ENCODE measurements at regions of chr2 and their contacts with region 1.

Region 1: DNA sequence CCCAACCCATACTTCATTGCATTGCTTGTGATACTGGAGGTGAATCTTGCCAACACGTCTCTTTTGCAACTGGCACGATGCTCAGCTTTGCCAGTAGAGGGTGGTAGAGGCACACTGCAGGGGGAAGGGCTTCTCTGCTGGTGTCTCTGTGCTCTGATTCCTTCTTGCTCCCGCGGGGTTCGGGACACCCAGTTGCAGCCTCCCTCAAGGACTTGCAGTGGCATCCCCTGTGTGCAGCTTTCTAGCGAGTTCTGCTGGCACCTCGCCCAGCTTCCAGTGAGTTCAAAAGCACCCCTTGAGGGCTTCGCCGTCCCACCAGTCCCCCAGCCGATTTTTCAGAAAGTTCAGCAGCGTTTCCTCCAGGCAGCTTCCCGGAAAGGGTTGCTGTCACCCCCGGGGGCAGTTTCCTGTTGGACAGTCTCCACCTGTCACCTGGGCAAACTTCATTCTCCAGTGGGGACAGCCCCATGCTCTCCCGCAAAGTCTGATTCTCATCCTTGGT is 35.3 kb upstream of the EN1 start:
- DNase-seq: peak; percentile 71
- ATAC-seq: peak; percentile 75
- H3K4me3 Mint-ChIP-seq: peak overlapping the region; percentile 73
- H3K27ac Mint-ChIP-seq: peak overlapping the region; percentile 46
- H3K4me1 Mint-ChIP-seq: peaks cover 14% of the 10 kb centered on the region
- H3K27me3 Mint-ChIP-seq: peaks cover 6% of the 10 kb centered on the region

Region 2: DNA sequence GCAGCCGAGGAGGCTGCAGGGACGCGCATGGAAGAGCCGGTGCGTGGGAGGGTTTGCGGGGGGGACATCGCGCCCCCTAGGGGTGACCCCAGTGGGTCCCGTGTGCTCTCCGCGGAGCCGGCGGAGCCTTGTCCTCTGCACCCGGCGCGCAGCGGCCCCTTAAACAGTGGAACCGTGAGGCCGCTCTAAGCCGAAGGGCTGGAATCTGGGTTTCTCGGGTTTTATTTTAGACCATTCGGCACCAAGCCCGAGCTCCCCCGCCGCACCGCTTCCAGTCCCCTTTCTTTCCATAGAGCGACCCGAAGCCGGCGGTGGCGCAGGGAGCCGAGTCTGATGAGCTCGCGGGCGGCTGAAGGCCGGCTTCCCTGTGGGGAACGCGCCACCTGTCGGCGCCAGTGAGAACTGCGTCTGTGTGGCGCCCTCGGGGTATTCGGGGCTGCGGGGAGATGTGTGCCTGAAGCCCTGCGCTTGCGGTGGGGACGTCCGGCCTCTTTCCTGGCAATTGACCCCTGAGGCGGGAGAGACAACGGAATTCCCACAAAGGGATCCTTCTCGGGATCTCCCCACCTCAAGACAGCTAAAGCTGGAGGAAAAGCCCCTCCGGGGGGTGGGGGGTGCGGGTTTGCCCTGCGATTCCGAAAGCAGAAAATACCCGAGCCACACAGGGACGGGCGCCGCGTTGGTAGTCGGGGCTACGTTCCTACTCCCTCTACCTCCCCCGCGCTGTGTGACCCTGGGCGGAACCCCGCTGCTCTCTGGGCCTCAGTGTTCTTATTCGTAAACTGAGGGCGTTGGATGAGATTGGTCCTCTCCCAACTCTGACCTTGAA is 27.1 kb before region 1 on chr2:
- CTCF ChIA-PET with region 1: interaction called, 14 read pairs
- POLR2A ChIA-PET with region 1: no interaction called
- DNase-seq: peak; percentile 82
- ATAC-seq: peak; percentile 90
- H3K4me3 Mint-ChIP-seq: peak overlapping the region; percentile 42
- H3K27ac Mint-ChIP-seq: peak overlapping the region; percentile 11
- H3K4me1 Mint-ChIP-seq: peaks cover 11% of the 10 kb centered on the region
- H3K27me3 Mint-ChIP-seq: peaks cover 79% of the 10 kb centered on the region

Region 3: DNA sequence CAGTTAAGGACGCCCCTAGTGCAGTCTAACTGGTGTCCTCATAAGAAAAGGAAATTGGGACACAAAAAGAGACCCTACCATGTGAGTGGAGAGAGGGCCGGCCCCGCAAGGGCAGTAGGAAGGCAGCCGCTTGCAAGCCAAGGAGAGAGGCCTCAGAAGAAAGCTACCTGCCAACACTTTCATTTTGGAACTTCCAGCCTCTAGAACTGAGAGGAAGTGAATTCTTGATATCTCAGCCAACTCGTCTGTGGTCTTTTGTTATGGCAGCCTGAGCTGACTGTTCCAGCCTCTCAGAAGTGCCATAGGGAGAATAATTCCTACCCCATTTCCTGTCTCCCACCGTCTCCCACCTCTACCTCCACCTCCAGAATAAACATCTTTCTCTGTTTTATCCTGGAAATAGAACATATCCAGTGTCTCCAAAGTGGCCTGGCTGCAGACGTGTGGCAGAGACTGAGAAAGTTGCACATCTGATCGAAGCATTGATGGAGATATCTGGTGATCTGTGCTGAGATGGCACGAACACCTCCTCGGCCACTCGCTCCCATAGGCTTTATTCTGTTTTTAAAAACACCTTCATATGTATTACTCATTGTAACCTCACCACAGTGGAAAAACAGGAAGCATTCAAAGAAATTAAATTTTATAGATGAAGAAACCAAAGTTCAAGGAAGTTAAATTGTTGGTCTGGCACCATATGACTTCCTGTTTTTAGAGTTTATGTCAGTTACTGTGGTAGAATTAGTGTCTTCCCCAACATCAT is 19.7 kb after region 1 on chr2:
- CTCF ChIA-PET with region 1: interaction called, 15 read pairs
- POLR2A ChIA-PET with region 1: interaction called, 3 read pairs
- DNase-seq: no peak
- ATAC-seq: no peak
- H3K4me3 Mint-ChIP-seq: no peak overlapping the region
- H3K27ac Mint-ChIP-seq: peak overlapping the region; percentile 60
- H3K4me1 Mint-ChIP-seq: peaks cover 17% of the 10 kb centered on the region
- H3K27me3 Mint-ChIP-seq: no peaks in the 10 kb centered on the region

Region 4: GRCh38 chr2:119126650-119127049 is 243.9 kb after region 1 on chr2:
- CTCF ChIA-PET with region 1: interaction called, 11 read pairs
- POLR2A ChIA-PET with region 1: no interaction called
- DNase-seq: peak; percentile 44
- ATAC-seq: no peak
- H3K4me3 Mint-ChIP-seq: no peak overlapping the region
- H3K27ac Mint-ChIP-seq: no peak overlapping the region
- H3K4me1 Mint-ChIP-seq: no peaks in the 10 kb centered on the region
- H3K27me3 Mint-ChIP-seq: no peaks in the 10 kb centered on the region

Region 5: DNA sequence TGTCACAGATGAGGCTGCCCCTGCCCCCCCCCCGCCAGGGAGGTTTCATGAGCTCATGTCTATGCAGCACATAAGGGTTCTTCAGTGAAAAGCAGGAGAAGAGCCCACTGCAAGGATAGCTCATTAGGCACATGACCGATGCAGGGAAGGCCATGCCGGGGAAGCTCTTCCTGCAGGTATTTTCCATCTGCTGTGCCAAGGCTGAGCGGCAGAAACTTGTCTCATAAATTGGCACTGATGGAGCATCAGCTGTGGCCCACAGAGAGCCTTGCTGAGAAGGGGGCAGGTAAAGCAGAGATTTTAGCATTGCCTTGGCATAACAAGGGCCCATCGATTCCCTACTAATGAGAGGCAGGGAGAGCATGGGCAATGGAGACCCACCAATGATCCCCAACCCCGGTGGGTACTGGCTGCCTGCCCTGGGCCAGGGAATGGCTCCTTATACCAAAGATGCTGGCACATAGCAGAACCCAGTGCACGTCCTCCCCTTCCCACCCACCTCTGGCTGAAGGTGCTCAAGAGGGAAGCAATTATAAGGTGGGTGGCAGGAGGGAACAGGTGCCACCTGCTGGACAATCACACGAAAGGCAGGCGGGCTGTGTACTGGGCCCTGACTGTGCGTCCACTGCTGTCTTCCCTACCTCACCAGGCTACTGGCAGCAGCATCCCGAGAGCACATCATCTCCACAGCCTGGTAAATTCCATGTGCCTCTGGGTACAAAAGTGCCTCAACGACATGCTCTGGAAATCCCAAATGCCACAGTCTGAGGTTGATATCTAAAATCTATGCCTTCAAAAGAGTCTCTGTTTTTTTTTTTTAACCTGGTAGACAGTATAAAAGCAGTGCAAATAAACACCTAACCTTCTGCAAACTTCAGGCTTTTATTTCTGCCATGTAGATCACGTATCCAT is 382.3 kb after region 1 on chr2:
- CTCF ChIA-PET with region 1: interaction called, 10 read pairs
- POLR2A ChIA-PET with region 1: no interaction called
- DNase-seq: peak; percentile 51
- ATAC-seq: peak; percentile 82
- H3K4me3 Mint-ChIP-seq: no peak overlapping the region
- H3K27ac Mint-ChIP-seq: no peak overlapping the region
- H3K4me1 Mint-ChIP-seq: no peaks in the 10 kb centered on the region
- H3K27me3 Mint-ChIP-seq: peaks cover 13% of the 10 kb centered on the region